AG04450 (cell line): ENCODE measurements at regions of chr6 and their contacts with region 1.

Region 1: GRCh38 chr6:42914546-42914945 is 1.3 kb upstream of the PTCRA start:
- DNase-seq: no peak
- H3K4me3 ChIP-seq: no peak overlapping the region
- H3K27ac ChIP-seq: no peak overlapping the region
- H3K27me3 ChIP-seq: peaks cover 2% of the 10 kb centered on the region
- CTCF ChIP-seq: no peak

Region 2: GRCh38 chr6:42928986-42929820 is 14.7 kb after region 1 on chr6 and contains the start of gene CNPY3:
- CTCF ChIA-PET with region 1: no interaction called
- POLR2A ChIA-PET with region 1: interaction called, 14 read pairs
- DNase-seq: peak; percentile 93
- H3K4me3 ChIP-seq: peak within 1 kb of the TSS; percentile 76
- H3K27ac ChIP-seq: peak within 1 kb of the TSS; percentile 96
- H3K27me3 ChIP-seq: peaks cover 2% of the 10 kb centered on the region
- CTCF ChIP-seq: no peak
- polyA plus RNA-seq, gene CNPY3: 38.4 and 39.2 TPM in 2 replicates